ENCODE measurements at regions of chr21 and their contacts with region 1.

Region 1: GRCh38 chr21:39379986-39380891 is 31.4 kb upstream of the HMGN1 start:
- DNase-seq: peak; percentile 76 to 91 (median 83)
- ATAC-seq: peak; percentile 99
- H3K4me3 ChIP-seq: peak overlapping the region; percentile 95
- H3K4me3 Mint-ChIP-seq: peak overlapping the region; percentile 88 to 95 (median 92)
- H3K27ac ChIP-seq: peak overlapping the region; percentile 84
- H3K27ac Mint-ChIP-seq: peak overlapping the region; percentile 33 to 95 (median 93)
- H3K4me1 ChIP-seq: peaks cover 7 to 10% of the 10 kb centered on the region in 2 donors
- H3K4me1 Mint-ChIP-seq: peaks cover 8 to 31% (median 24%) of the 10 kb centered on the region in 7 donors
- H3K27me3 ChIP-seq: no peaks in the 10 kb centered on the region
- H3K27me3 Mint-ChIP-seq: peaks cover 0 to 5% (median 4%) of the 10 kb centered on the region in 5 donors

Region 2: GRCh38 chr21:39296891-39297290 is 83.3 kb before region 1 on chr21:
- CTCF ChIA-PET with region 1: no interaction called
- POLR2A ChIA-PET with region 1: no interaction called
- intact Hi-C with region 1: no loop called
- DNase-seq: no peak
- ATAC-seq: no peak
- H3K4me3 ChIP-seq: no peak overlapping the region
- H3K4me3 Mint-ChIP-seq: peak overlapping the region in 2 of 10 donors; percentile 36 to 54
- H3K27ac ChIP-seq: no peak overlapping the region
- H3K27ac Mint-ChIP-seq: peak overlapping the region in 2 of 9 donors; percentile 37 to 62
- H3K4me1 ChIP-seq: peaks cover 9 to 12% of the 10 kb centered on the region in 2 donors
- H3K4me1 Mint-ChIP-seq: peaks cover 19 to 51% (median 39%) of the 10 kb centered on the region in 7 donors
- H3K27me3 ChIP-seq: no peaks in the 10 kb centered on the region
- H3K27me3 Mint-ChIP-seq: no peaks in the 10 kb centered on the region

Region 3: GRCh38 chr21:39445321-39446269 is 65.4 kb after region 1 on chr21 and contains the start of gene LCA5L:
- CTCF ChIA-PET with region 1: no interaction called
- POLR2A ChIA-PET with region 1: no interaction called
- intact Hi-C with region 1: loop called in 1 of 2 experiments (anchors 2 kb)
- DNase-seq: peak; percentile 80 to 96 (median 90)
- ATAC-seq: peak; percentile 93
- H3K4me3 ChIP-seq: peak within 1 kb of the TSS; percentile 83
- H3K4me3 Mint-ChIP-seq: peak within 1 kb of the TSS; percentile 91 to 99 (median 94)
- H3K27ac ChIP-seq: peak within 1 kb of the TSS; percentile 76
- H3K27ac Mint-ChIP-seq: peak within 1 kb of the TSS; percentile 86 to 98 (median 94)
- H3K4me1 ChIP-seq: peaks cover 11 to 13% of the 10 kb centered on the region in 2 donors
- H3K4me1 Mint-ChIP-seq: peaks cover 8 to 26% (median 14%) of the 10 kb centered on the region in 7 donors
- H3K27me3 ChIP-seq: peaks cover 0 to 2% of the 10 kb centered on the region in 2 donors
- H3K27me3 Mint-ChIP-seq: peaks cover 0 to 44% (median 14%) of the 10 kb centered on the region in 5 donors
- total RNA-seq, gene LCA5L: not detected

Measured in naive thymus-derived CD4-positive, alpha-beta T cell (primary cell).